ENCODE measurements at regions of chr10 and their contacts with region 1.

Region 1: GRCh38 chr10:123559066-123559822 is 106.9 kb upstream of the GPR26 start:
- DNase-seq: peak; percentile 73
- ATAC-seq: peak; percentile 83 to 88

Region 2: GRCh38 chr10:122648599-122649428 is 910.4 kb before region 1 on chr10:
- intact Hi-C with region 1: loop called in 1 of 2 experiments (anchors 5 kb)
- DNase-seq: peak; percentile 57
- ATAC-seq: peak; percentile 63 to 73

Region 3: DNA sequence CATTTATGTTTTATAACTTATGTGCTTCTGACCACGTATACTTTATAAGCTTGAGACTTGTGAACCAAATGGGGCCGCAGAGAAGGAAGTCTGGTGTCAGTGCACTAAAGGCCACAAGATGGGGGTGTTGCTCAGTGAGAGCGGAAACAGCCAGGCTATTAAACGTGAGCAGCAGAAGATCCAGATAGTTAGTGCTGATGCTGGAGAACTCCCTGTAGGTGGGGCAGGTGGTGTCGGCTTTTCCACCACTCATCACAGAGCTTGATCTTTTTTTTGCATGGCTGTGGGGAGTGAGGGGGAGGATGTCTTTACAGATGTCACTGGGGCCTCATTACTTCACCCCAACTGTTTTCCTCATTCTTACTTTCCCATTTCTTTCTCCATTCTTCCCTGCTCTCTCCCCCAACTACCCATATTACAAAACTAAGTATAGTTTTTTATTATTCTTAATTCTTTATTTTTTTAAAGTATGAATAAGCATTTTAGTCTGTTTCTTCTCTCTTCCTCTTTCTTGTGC is 515.8 kb before region 1 on chr10:
- intact Hi-C with region 1: loop called (anchors 1 to 5 kb)
- DNase-seq: no peak
- ATAC-seq: peak in 1 of 2 donors; percentile 61

Region 4: DNA sequence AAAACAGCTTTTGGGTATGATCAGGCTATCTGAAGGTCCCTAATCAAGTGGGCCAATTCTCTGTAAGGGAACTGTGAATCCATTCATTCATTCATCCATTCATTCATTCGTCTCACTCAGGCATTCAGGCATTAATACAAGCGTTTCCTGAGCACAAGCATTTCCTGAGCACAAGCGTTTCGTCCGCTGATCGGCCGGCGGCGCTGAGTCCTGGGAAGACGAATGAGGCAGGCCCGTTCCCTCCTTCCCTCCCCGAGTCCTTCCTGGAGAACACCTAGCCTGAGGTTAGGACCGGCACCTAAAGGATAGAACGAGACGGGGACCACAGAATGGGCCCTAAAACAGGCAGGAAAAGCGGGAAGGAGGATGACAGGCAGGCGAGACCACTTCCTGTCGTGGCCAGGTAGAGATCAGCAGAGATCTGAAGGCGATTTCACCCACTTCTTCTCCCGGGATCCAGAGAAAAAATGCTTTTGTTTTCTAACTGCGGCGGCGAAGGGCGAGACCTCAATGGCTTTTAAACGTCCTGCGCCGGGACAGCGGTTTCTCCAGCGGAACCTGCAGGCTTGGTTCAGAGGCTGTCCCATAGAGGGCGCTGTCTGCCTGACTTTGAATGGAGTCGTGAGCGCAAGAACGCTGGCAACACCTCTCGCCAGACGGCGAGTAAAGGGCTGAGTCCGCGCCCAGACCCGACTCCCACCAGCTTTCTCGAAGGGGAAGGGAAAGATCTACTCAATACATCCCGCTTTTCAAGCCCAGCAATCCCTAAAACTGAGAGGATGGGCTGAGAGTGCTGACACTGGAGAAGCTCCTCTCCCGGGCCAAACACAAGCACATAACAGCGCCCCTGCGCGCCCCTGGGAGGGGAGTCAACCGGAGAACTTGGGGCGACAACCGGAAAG is 426.4 kb before region 1 on chr10:
- intact Hi-C with region 1: loop called (anchors 2 to 5 kb)
- DNase-seq: peak; percentile 89
- ATAC-seq: peak; percentile 77 to 86